Mammary epithelial cell (primary cell): ENCODE measurements at regions of chr7 and their contacts with region 1.

Region 1: GRCh38 chr7:77738871-77739270 is 42.6 kb downstream of the RSBN1L start:
- DNase-seq: no peak
- H3K4me3 ChIP-seq: no peak overlapping the region
- H3K27ac ChIP-seq: no peak overlapping the region
- H3K4me1 ChIP-seq: no peaks in the 10 kb centered on the region
- H3K27me3 ChIP-seq: no peaks in the 10 kb centered on the region
- CTCF ChIP-seq: no peak

Region 2: GRCh38 chr7:77674878-77675277 is 64.0 kb before region 1 on chr7:
- CTCF ChIA-PET with region 1: no interaction called
- dilution Hi-C with region 1: no loop called
- in situ Hi-C with region 1: no loop called
- intact Hi-C with region 1: no loop called
- DNase-seq: peak; percentile 92
- H3K4me3 ChIP-seq: no peak overlapping the region
- H3K27ac ChIP-seq: peak overlapping the region; percentile 67
- H3K4me1 ChIP-seq: peaks cover 10% of the 10 kb centered on the region
- H3K27me3 ChIP-seq: no peaks in the 10 kb centered on the region
- CTCF ChIP-seq: no peak

Region 3: GRCh38 chr7:77822269-77822668 is 83.4 kb after region 1 on chr7:
- CTCF ChIA-PET with region 1: no interaction called
- dilution Hi-C with region 1: no loop called
- in situ Hi-C with region 1: no loop called
- intact Hi-C with region 1: no loop called
- DNase-seq: no peak
- H3K4me3 ChIP-seq: no peak overlapping the region
- H3K27ac ChIP-seq: no peak overlapping the region
- H3K4me1 ChIP-seq: no peaks in the 10 kb centered on the region
- H3K27me3 ChIP-seq: no peaks in the 10 kb centered on the region
- CTCF ChIP-seq: no peak

Region 4: GRCh38 chr7:78073609-78074382 is 334.9 kb after region 1 on chr7:
- CTCF ChIA-PET with region 1: interaction called, 25 read pairs
- dilution Hi-C with region 1: no loop called
- in situ Hi-C with region 1: no loop called
- intact Hi-C with region 1: no loop called
- DNase-seq: no peak
- H3K4me3 ChIP-seq: no peak overlapping the region
- H3K27ac ChIP-seq: no peak overlapping the region
- H3K4me1 ChIP-seq: no peaks in the 10 kb centered on the region
- H3K27me3 ChIP-seq: no peaks in the 10 kb centered on the region
- CTCF ChIP-seq: no peak